ENCODE measurements at regions of chr18 and their contacts with region 1.

Region 1: DNA sequence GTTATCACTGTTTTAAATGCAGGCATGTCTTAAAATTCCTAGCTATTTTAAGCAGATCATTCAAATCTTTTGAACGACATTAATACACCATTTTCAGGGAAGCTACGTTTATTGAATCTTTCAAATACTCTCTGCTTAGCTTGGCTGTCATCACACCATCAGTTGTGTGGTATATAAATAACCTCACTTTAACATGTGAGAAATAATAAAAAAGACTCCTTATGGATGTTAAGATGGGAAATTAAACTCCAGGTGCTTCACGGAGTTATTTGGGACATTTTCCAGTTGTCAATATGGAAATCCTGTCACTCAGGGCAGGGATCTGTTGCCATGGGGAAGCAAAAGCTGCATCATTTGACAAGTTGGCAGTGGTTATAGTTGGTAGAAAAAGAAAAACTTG is 649.2 kb upstream of the CDH2 start:
- DNase-seq: no peak
- H3K4me3 ChIP-seq: no peak overlapping the region
- H3K27ac ChIP-seq: no peak overlapping the region
- H3K4me1 ChIP-seq: no peaks in the 10 kb centered on the region
- H3K27me3 ChIP-seq: no peaks in the 10 kb centered on the region
- CTCF ChIP-seq: no peak
- POLR2A ChIP-seq: no peak

Region 2: DNA sequence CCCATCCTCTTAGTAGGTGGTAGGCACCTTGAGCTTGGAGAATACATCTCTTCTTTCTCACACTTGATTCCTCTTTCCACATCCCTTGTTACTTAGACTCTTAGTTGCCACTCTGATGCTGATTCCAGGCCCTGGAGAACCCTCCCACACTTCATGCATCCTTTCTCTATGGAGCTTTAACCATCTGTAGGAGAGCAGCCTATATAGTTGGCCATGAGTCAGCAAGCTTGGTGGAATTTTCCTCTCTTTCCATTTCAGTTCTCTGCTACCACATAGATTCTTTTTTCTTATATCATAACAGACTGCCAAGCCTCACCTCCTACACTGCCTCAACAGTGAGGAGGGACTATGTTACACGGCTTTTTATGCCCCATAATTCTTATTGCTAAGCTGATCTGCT is 202.5 kb after region 1 on chr18:
- intact Hi-C with region 1: loop called (anchors 5 kb)
- DNase-seq: no peak
- H3K4me3 ChIP-seq: no peak overlapping the region
- H3K27ac ChIP-seq: no peak overlapping the region
- H3K4me1 ChIP-seq: no peaks in the 10 kb centered on the region
- H3K27me3 ChIP-seq: no peaks in the 10 kb centered on the region
- CTCF ChIP-seq: no peak
- POLR2A ChIP-seq: no peak

Measured in breast epithelium (tissue), 4 donors.